Natural killer cell (primary cell): ENCODE measurements at regions of chr1 and their contacts with region 1.

Region 1: GRCh38 chr1:198638894-198639635 is at the start of gene PTPRC:
- DNase-seq: peak in 1 of 2 donors; percentile 77
- ATAC-seq: peak; percentile 64 to 84 (median 74)
- H3K4me3 ChIP-seq: peak within 1 kb of the TSS; percentile 99
- H3K4me3 Mint-ChIP-seq: peak within 1 kb of the TSS; percentile 99
- H3K27ac ChIP-seq: peak within 1 kb of the TSS; percentile 80
- H3K27ac Mint-ChIP-seq: peak within 1 kb of the TSS; percentile 90 to 94
- H3K4me1 ChIP-seq: peaks cover 18% of the 10 kb centered on the region
- H3K4me1 Mint-ChIP-seq: peaks cover 60 to 61% of the 10 kb centered on the region in 2 donors
- H3K27me3 ChIP-seq: no peaks in the 10 kb centered on the region
- H3K27me3 Mint-ChIP-seq: no peaks in the 10 kb centered on the region
- CTCF ChIP-seq: no peak
- total RNA-seq, gene PTPRC: 1,142 to 1,334 (median 1,200) TPM

Region 2: DNA sequence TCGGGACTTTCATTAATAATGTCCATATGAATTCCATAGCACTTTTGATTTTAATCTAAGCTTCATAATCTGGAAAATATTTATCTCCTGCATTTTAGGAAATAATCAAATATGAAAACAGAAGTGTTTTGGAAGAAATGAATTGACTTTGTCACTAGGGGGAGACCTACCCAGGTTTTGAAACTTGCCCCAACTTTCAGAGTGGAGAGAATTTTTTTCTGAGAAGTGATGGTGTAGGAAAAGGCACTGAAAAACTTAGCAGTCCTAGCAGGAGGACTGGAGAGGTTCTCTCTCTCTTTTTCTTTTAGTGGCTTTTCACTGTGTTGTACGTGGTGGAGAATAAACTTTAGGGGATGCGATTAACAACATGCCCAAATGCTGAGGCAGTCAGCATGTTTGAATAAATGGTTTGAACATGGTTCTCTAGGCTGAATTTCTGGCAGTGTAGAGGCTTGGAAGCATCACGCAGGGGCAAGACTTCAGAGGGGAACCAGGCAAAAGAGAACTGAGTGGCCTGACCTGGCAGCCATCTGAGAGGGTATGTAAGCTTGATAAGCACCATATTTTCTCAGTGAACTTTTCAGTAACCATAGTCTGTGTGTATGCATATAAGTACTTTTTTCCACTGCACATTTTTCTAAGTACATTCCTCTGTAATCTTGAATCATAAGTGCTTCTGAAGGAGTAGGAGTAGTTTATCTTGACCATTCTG is 550.5 kb before region 1 on chr1:
- intact Hi-C with region 1: no loop called
- DNase-seq: peak in 1 of 2 donors; percentile 68
- ATAC-seq: peak in 2 of 3 donors; percentile 53 to 65
- H3K4me3 ChIP-seq: no peak overlapping the region
- H3K4me3 Mint-ChIP-seq: no peak overlapping the region
- H3K27ac ChIP-seq: no peak overlapping the region
- H3K27ac Mint-ChIP-seq: no peak overlapping the region
- H3K4me1 ChIP-seq: no peaks in the 10 kb centered on the region
- H3K4me1 Mint-ChIP-seq: peaks cover 5% of the 10 kb centered on the region in 2 donors
- H3K27me3 ChIP-seq: no peaks in the 10 kb centered on the region
- H3K27me3 Mint-ChIP-seq: peaks cover 2 to 6% of the 10 kb centered on the region in 2 donors
- CTCF ChIP-seq: peak; percentile 87

Region 3: GRCh38 chr1:198556971-198557370 is 82.1 kb before region 1 on chr1:
- intact Hi-C with region 1: loop called (anchors 5 kb)
- DNase-seq: peak; percentile 57 to 89
- ATAC-seq: peak; percentile 85 to 96 (median 93)
- H3K4me3 ChIP-seq: no peak overlapping the region
- H3K4me3 Mint-ChIP-seq: peak overlapping the region; percentile 78
- H3K27ac ChIP-seq: peak overlapping the region; percentile 66
- H3K27ac Mint-ChIP-seq: peak overlapping the region; percentile 78 to 79
- H3K4me1 ChIP-seq: peaks cover 23% of the 10 kb centered on the region
- H3K4me1 Mint-ChIP-seq: peaks cover 66 to 67% of the 10 kb centered on the region in 2 donors
- H3K27me3 ChIP-seq: no peaks in the 10 kb centered on the region
- H3K27me3 Mint-ChIP-seq: no peaks in the 10 kb centered on the region
- CTCF ChIP-seq: no peak

Region 4: GRCh38 chr1:198620951-198621824 is 17.9 kb before region 1 on chr1:
- intact Hi-C with region 1: loop called (anchors 1 kb)
- DNase-seq: peak; percentile 53 to 86
- ATAC-seq: peak; percentile 70 to 87 (median 83)
- H3K4me3 ChIP-seq: peak overlapping the region; percentile 16
- H3K4me3 Mint-ChIP-seq: peak overlapping the region; percentile 95
- H3K27ac ChIP-seq: peak overlapping the region; percentile 94
- H3K27ac Mint-ChIP-seq: peak overlapping the region; percentile 91 to 99
- H3K4me1 ChIP-seq: peaks cover 54% of the 10 kb centered on the region
- H3K4me1 Mint-ChIP-seq: peaks cover 78 to 81% of the 10 kb centered on the region in 2 donors
- H3K27me3 ChIP-seq: no peaks in the 10 kb centered on the region
- H3K27me3 Mint-ChIP-seq: no peaks in the 10 kb centered on the region
- CTCF ChIP-seq: no peak

Region 5: DNA sequence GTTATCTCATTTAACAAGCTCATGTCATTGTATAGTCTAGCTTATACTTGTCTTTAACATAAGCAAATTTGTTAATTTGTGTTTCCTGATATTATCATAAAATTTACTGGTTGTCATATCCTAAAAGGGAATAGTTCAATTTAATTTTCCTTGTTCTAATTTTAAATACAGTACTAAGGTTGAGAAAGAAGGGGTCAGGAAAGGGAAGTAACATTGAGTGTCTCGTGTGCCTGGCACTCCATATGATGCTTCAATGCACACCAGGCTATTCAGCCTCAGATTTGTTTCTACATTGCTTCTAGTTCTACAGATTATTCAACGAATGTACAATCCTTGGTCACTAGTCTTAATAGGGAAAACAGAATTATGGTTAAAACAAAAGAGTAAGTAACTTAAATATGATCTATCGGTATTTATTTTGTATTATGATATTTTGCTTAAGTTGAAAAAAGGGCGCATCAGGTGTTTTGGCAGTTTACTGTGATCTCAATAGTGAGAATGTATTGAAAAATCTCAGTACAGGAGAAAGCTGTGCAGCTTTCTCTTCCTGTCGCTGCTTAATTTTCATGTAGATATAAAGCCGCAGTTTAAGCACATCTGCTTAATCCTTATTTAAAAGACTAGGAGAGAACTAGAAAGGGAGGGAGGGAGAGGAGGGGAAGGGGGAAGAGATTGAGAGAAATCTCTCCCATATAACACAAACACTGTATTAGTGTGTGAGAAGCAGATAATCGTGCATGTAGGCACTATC is 12.8 kb after region 1 on chr1:
- intact Hi-C with region 1: loop called (anchors 1 kb)
- DNase-seq: peak in 1 of 2 donors; percentile 53
- ATAC-seq: peak; percentile 21 to 62 (median 39)
- H3K4me3 ChIP-seq: peak overlapping the region; percentile 4
- H3K4me3 Mint-ChIP-seq: peak overlapping the region; percentile 83
- H3K27ac ChIP-seq: peak overlapping the region; percentile 68
- H3K27ac Mint-ChIP-seq: peak overlapping the region; percentile 86 to 90
- H3K4me1 ChIP-seq: peaks cover 20% of the 10 kb centered on the region
- H3K4me1 Mint-ChIP-seq: peaks cover 71 to 74% of the 10 kb centered on the region in 2 donors
- H3K27me3 ChIP-seq: no peaks in the 10 kb centered on the region
- H3K27me3 Mint-ChIP-seq: no peaks in the 10 kb centered on the region
- CTCF ChIP-seq: no peak

Region 6: GRCh38 chr1:198657550-198658064 is 18.5 kb after region 1 on chr1:
- intact Hi-C with region 1: loop called (anchors 1 kb)
- DNase-seq: peak in 1 of 2 donors; percentile 81
- ATAC-seq: peak; percentile 39 to 66 (median 55)
- H3K4me3 ChIP-seq: peak overlapping the region; percentile 2
- H3K4me3 Mint-ChIP-seq: peak overlapping the region; percentile 85
- H3K27ac ChIP-seq: peak overlapping the region; percentile 88
- H3K27ac Mint-ChIP-seq: peak overlapping the region; percentile 90 to 94
- H3K4me1 ChIP-seq: peaks cover 22% of the 10 kb centered on the region
- H3K4me1 Mint-ChIP-seq: peaks cover 61 to 63% of the 10 kb centered on the region in 2 donors
- H3K27me3 ChIP-seq: no peaks in the 10 kb centered on the region
- H3K27me3 Mint-ChIP-seq: no peaks in the 10 kb centered on the region
- CTCF ChIP-seq: no peak

Region 7: GRCh38 chr1:198669023-198669698 is 30.1 kb after region 1 on chr1:
- intact Hi-C with region 1: no loop called
- DNase-seq: peak; percentile 55 to 78
- ATAC-seq: peak; percentile 81 to 89 (median 87)
- H3K4me3 ChIP-seq: no peak overlapping the region
- H3K4me3 Mint-ChIP-seq: peak overlapping the region; percentile 70
- H3K27ac ChIP-seq: peak overlapping the region; percentile 86
- H3K27ac Mint-ChIP-seq: peak overlapping the region; percentile 88 to 90
- H3K4me1 ChIP-seq: peaks cover 35% of the 10 kb centered on the region
- H3K4me1 Mint-ChIP-seq: peaks cover 82 to 83% of the 10 kb centered on the region in 2 donors
- H3K27me3 ChIP-seq: no peaks in the 10 kb centered on the region
- H3K27me3 Mint-ChIP-seq: no peaks in the 10 kb centered on the region
- CTCF ChIP-seq: no peak

Region 8: DNA sequence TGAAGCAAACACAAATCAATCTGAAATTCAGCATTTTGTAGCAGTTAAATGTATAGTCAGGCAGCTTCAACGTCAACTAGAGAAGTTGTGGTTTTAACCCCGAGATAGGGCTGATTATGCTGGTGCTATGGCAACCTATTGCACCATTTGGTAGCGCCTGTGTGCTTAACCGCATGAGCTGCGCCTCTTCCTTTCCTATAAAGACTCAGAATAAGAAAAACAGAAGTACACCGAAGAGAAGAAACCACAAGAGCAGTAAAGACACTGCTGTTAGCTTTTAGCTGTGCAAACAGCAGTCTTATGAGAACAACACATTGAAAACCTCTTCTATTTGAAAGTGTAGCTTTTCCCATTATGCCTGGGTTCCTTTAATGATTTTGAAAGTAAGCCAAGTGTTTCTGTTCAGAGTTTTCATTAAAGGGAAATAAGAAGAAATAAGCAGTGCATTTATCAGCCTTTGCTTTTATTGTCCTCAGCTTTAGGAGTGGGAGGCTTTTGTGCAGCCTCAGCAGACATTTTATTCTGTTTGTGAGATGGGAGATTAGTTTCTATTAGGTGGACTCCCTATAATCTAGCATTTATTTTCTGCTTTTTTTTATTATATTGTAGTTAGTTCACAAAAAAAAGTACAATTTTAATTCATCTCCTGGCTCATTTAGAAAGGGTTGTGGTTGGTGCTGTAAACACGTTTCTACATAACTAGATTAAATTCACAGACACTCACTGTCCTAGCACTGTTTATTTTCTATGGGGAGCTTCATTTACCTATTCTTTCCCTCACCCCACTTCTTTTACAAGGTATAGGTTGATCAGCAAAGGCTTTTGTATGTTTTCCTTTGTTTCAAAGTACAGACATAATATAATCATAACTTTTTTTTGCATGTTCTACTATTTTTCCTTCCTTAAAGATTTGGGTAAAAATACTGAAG is 43.0 kb after region 1 on chr1:
- intact Hi-C with region 1: loop called (anchors 2 kb)
- DNase-seq: peak; percentile 63 to 96
- ATAC-seq: peak; percentile 66 to 93 (median 86)
- H3K4me3 ChIP-seq: peak overlapping the region; percentile 21
- H3K4me3 Mint-ChIP-seq: peak overlapping the region; percentile 78
- H3K27ac ChIP-seq: peak overlapping the region; percentile 90
- H3K27ac Mint-ChIP-seq: peak overlapping the region; percentile 88 to 90
- H3K4me1 ChIP-seq: peaks cover 27% of the 10 kb centered on the region
- H3K4me1 Mint-ChIP-seq: peaks cover 82 to 83% of the 10 kb centered on the region in 2 donors
- H3K27me3 ChIP-seq: no peaks in the 10 kb centered on the region
- H3K27me3 Mint-ChIP-seq: no peaks in the 10 kb centered on the region
- CTCF ChIP-seq: no peak

Region 9: GRCh38 chr1:198699167-198700015 is 60.3 kb after region 1 on chr1:
- intact Hi-C with region 1: no loop called
- DNase-seq: peak; percentile 35 to 84
- ATAC-seq: peak; percentile 42 to 81 (median 66)
- H3K4me3 ChIP-seq: no peak overlapping the region
- H3K4me3 Mint-ChIP-seq: peak overlapping the region; percentile 65
- H3K27ac ChIP-seq: no peak overlapping the region
- H3K27ac Mint-ChIP-seq: peak overlapping the region; percentile 83 to 88
- H3K4me1 ChIP-seq: peaks cover 25% of the 10 kb centered on the region
- H3K4me1 Mint-ChIP-seq: peaks cover 65 to 77% of the 10 kb centered on the region in 2 donors
- H3K27me3 ChIP-seq: no peaks in the 10 kb centered on the region
- H3K27me3 Mint-ChIP-seq: no peaks in the 10 kb centered on the region
- CTCF ChIP-seq: peak; percentile 1